Left cardiac atrium (tissue), 4 donors: ENCODE measurements at regions of chr10 and their contacts with region 1.

Region 1: DNA sequence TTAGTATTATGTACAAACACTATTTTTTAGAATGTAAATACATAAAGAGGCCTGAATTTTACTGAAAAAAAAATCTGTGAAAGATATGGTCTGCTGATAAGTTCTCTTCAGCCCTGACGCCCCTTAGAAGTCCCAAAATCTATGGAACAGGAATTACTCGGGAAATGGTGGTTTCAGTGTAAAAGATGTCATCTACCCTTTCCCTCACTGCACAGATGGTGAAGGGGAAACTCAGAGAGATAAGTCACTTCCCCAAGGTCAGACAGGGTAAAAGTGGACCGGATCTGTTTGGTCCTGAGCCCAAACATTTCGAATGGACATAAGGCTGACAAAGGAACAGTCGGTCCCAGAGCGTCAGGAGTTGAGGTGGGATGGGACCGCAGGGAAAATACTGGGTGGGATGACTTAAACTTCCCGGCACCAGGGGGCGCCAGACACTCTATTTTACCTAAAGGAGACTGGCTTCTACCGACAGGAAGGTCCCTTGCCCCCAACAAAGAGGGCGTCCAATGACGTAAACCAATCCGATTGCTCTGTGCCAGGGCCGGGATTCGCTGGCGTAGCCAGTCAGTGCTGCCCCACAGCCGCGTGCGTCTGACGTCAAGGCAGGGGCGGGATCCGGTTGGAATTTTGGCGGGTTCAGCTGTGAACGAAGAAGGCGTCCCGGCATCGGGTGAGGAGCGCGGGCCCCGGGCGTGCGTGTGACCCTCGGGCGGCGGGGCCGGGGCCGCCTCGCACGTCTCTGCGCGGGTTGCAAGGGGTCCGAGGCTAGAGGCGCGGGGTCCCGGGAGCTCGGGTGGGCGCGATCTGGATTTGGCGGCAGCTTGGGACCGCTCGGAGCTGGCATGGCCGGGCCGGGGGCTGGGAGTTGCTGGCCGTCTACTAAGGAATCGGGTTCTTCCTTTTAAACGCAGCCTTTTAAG is at the start of gene MCM10:
- DNase-seq: peak; percentile 98
- ATAC-seq: peak; percentile 100
- total RNA-seq, gene MCM10: 1.3 TPM

Region 2: GRCh38 chr10:13284050-13284449 is 122.9 kb after region 1 on chr10:
- intact Hi-C with region 1: loop called in 1 of 2 experiments (anchors 10 kb)
- DNase-seq: no peak
- ATAC-seq: no peak

Region 3: DNA sequence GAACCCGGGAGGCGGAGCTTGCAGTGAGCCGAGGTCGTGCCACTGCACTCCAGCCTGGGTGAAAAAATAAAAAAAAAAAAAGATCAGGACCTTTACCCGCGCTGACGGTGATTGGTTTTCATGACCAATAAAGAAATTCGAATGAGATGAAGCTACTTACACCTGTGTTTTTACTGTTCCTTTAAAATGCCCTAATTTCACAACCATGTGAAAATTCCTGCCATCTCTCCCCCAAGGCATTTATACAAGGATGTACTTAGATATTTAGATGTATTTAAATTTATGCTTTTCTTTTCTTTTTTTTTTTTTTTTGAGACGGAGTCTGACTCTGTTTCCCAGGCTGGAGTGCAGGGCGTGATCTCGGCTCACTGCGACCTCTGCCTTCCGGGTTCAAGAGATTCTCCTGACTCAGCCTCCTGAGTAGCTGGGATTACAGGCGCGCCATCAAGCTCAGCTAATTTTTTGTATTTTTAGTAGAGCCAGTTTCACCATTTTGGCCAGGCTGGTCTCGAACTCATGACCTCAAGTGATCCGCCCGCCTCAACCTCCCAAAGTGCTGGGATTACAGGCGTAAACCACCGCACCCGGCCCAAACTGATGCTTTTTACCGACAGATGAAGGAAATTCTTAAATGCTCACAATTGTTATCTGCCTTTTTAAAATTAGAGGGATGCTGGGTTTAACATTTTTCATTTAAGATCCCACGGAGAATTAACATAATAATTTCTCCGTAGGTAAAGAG is 141.8 kb after region 1 on chr10:
- intact Hi-C with region 1: loop called in 1 of 2 experiments (anchors 1 kb)
- DNase-seq: no peak
- ATAC-seq: no peak

Region 4: GRCh38 chr10:13371897-13372470 is 210.8 kb after region 1 on chr10:
- intact Hi-C with region 1: loop called in 1 of 2 experiments (anchors 5 kb)
- DNase-seq: peak; percentile 59
- ATAC-seq: peak; percentile 94 to 95

Region 5: GRCh38 chr10:13518076-13518692 is 357.0 kb after region 1 on chr10:
- intact Hi-C with region 1: loop called in 1 of 2 experiments (anchors 10 kb)
- DNase-seq: no peak
- ATAC-seq: peak in 1 of 2 donors; percentile 41

Region 6: DNA sequence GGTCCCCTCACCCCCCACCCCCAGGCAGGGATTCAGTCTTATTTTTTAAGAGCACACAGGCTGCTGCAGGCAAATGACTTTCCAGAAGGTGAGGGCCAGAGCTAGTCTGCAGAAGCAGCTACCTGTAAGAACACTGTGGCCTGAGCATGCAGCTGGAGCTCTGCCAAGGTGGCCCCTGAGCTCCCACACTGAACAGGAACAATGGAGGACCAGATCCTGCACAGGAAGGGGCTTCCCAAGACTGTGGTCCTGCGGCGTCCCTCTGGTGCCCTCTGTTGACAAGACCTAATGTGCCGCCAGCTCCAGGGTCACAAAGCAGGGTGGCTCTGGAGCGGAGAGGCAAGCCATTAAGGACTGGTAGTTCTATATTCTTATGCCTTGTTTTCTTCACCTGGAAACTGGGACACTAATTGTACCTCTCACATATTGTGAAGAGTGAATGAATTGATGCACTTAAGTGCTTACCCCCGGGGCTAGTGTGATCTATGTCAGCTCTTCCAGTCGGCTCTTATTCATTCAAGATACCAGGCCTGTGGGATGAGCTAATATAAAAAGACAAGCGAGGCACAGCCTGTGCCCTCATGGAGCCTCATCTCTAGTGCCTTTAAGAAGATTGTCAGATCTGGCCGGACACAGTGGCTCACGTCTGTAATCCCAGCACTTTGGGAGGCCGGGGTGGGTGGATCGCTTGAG is 375.6 kb after region 1 on chr10:
- intact Hi-C with region 1: loop called in 1 of 2 experiments (anchors 5 kb)
- DNase-seq: peak; percentile 47
- ATAC-seq: peak; percentile 80 to 81